Posterior vena cava (tissue), 2 donors: ENCODE measurements at regions of chr2 and their contacts with region 1.

Region 1: DNA sequence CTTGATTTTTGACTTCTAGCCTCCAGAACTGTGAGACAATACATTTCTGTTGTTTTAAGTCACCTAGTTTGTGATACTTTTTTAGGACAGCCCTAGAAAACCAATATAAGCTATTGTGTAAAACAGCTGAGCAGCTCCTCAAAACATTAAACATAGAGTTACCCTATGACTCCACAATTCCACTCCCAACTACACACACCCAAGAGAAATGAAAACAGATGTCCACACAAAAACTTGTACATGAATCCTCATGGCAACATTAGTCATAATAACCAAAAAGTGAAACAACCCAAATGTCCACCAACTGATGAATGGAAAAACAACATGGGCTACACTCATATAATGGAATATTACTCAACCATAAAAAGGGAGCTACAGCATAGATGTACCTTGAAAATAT is 32.6 kb downstream of the TNS1 start:
- DNase-seq: no peak

Region 2: DNA sequence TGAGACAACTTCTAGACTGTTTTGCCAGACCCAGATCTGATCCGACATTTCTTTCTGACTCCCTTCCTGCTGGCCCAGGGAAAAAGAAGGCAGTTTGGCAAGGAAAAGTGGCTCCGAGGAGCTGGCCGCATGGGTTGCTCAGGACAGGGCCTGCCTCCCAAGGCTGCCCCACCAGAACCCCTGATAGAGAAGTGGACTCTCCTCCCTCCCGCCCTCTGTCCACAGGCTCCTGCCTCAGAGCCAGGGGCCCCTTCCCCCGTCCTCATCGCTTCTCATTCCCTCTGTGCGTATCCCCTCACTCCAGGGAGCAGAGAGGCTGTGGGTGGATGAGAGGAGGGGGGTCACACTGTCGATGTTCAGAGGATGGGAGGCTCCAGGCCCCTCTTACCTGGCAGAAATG is 77.6 kb before region 1 on chr2:
- intact Hi-C with region 1: loop called in 1 of 2 experiments (anchors 1 kb)
- DNase-seq: no peak

Region 3: DNA sequence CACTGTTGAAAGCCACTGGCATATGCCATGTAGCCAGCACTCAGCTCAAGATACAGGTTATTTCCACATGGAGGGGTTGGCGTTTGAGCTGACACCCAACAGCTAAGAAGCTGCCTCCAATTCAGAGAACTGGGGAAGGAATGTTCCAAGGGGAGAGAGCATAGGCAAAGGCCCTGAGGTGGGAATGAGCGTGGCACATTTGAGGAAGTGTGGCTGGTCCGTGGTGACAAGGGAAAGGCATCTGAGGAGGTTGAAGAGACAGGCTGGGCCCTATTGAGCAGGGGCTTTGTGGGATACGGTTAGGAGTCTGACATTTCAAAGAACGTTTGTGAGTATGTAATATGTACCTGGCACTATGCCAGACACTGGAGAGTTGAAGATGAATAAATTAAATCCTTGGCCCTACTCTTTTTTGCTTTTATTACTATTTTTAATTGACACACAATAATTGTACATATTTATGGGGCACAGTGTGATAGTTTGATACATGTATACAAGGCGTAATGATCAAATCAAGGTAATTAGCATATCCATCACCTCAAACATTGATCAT is 349.7 kb after region 1 on chr2:
- intact Hi-C with region 1: no loop called
- DNase-seq: no peak

Region 4: DNA sequence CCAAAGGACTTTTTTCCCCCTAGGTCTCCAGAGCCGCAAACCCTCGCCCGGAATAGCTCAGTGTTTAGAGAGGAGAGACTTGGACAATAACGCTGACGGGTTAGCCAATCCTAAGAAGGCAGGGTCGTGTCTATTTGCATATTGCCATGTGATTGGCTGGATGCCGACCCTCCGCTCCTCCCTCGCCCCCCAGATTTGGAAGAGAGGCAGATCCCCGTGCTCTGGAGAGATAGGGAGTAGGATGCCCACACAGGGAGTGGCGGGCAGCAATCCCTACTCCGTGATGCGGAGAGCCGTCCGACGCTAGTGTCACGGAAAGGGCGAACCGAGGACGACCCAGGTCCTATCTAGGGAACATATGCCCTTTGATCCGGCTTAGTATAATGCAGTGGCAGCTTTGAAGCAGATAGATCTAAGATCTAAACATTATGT is 890.8 kb after region 1 on chr2:
- intact Hi-C with region 1: no loop called
- DNase-seq: peak; percentile 79